ENCODE measurements at regions of chrX and their contacts with region 1.

Region 1: GRCh38 chrX:9708904-9709553 is 56.6 kb downstream of the GPR143 start:
- DNase-seq: peak; percentile 21
- ATAC-seq: peak; percentile 86
- H3K4me3 ChIP-seq: no peak overlapping the region
- H3K27ac ChIP-seq: no peak overlapping the region
- H3K4me1 ChIP-seq: no peaks in the 10 kb centered on the region
- H3K27me3 ChIP-seq: no peaks in the 10 kb centered on the region
- CTCF ChIP-seq: peak; percentile 75
- EP300 ChIP-seq: no peak
- POLR2A ChIP-seq: no peak
- RAD21 ChIP-seq: peak; percentile 46; the same call in 1 of the 2 replicates

Region 2: GRCh38 chrX:8971116-8971515 is 737.9 kb before region 1 on chrX:
- CTCF ChIA-PET with region 1: no interaction called
- POLR2A ChIA-PET with region 1: no interaction called
- in situ Hi-C with region 1: loop called (anchors 25 kb)
- intact Hi-C with region 1: loop called (anchors 1 kb)
- DNase-seq: peak; percentile 39
- ATAC-seq: peak; percentile 81
- H3K4me3 ChIP-seq: no peak overlapping the region
- H3K27ac ChIP-seq: no peak overlapping the region
- H3K4me1 ChIP-seq: no peaks in the 10 kb centered on the region
- H3K27me3 ChIP-seq: no peaks in the 10 kb centered on the region
- CTCF ChIP-seq: peak; percentile 56
- EP300 ChIP-seq: no peak
- POLR2A ChIP-seq: no peak
- RAD21 ChIP-seq: no peak